ENCODE measurements at regions of chr5 and their contacts with region 1.

Region 1: GRCh38 chr5:151659001-151659754 is 27.5 kb downstream of the SPARC start:
- DNase-seq: peak; percentile 96

Region 2: DNA sequence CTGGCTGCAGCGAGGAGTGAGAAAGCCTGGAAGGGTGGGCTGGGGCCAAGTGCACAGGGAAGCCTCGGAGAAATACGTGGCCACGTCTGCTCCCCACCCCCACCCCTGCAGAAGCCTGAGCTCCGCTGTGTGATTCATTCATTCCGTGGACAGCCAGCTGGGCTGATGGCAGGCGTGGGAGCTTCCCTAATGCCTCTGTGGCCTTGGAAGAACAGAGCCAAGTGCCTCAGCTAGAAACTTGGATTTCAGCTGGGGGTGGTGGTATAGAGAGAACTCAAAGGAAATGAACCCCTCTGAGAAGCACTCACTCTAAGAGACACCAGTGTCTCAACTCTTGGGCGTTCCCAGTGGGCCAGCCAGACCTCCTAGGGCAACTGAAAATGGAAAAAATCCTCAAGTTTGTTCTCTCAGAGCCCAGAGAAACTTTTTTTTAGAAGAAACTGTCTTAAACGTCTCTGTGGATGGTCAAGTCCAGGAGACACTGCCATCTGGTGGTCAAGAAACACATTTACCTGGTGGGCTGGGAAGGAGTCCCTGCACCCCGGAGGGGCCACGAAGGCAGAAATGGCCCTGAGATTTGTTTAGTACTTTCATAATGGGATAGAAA is 81.3 kb after region 1 on chr5:
- intact Hi-C with region 1: loop called in 1 of 2 experiments (anchors 1 kb)
- DNase-seq: peak; percentile 92

Measured in posterior vena cava (tissue), 2 donors.